Caco-2 (cell line): ENCODE measurements at regions of chr3 and their contacts with region 1.

Region 1: DNA sequence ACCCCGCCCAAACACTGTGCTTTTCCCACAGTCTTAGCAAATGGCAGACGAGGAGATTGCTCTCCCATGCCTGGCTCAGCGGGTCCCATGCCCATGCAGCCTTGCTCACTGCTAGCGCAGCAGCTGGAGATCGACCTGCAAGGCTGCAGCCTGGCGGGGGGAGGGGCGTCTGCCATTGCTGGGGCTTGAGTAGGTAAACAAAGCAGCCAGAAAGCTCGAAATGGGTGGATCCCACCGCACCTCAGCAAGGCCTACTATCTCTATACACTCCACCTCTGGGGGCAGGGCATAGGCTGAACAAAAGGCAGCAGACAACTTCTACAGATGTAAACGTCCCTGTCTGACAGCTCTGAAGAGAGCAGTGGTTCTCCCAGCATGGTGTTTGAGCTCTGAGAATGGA is 27.2 kb upstream of the WDR5B start:
- DNase-seq: peak; percentile 70 to 82
- H3K4me3 ChIP-seq: no peak overlapping the region
- H3K4me3 Mint-ChIP-seq: peak overlapping the region; percentile 56
- H3K27ac Mint-ChIP-seq: peak overlapping the region; percentile 88
- H3K4me1 ChIP-seq: peaks cover 32% of the 10 kb centered on the region
- H3K4me1 Mint-ChIP-seq: peaks cover 36% of the 10 kb centered on the region
- H3K27me3 ChIP-seq: no peaks in the 10 kb centered on the region
- H3K27me3 Mint-ChIP-seq: no peaks in the 10 kb centered on the region
- CTCF ChIP-seq: no peak

Region 2: GRCh38 chr3:122331886-122332285 is 111.2 kb before region 1 on chr3:
- CTCF ChIA-PET with region 1: no interaction called
- POLR2A ChIA-PET with region 1: no interaction called
- intact Hi-C with region 1: no loop called
- DNase-seq: no peak
- H3K4me3 ChIP-seq: no peak overlapping the region
- H3K4me3 Mint-ChIP-seq: no peak overlapping the region
- H3K27ac Mint-ChIP-seq: no peak overlapping the region
- H3K4me1 ChIP-seq: no peaks in the 10 kb centered on the region
- H3K4me1 Mint-ChIP-seq: no peaks in the 10 kb centered on the region
- H3K27me3 ChIP-seq: no peaks in the 10 kb centered on the region
- H3K27me3 Mint-ChIP-seq: peaks cover 6% of the 10 kb centered on the region
- CTCF ChIP-seq: no peak

Region 3: GRCh38 chr3:122392868-122393844 is 49.9 kb before region 1 on chr3:
- CTCF ChIA-PET with region 1: no interaction called
- POLR2A ChIA-PET with region 1: no interaction called
- intact Hi-C with region 1: no loop called
- DNase-seq: peak in 1 of 2 experiments; percentile 39
- H3K4me3 ChIP-seq: no peak overlapping the region
- H3K4me3 Mint-ChIP-seq: no peak overlapping the region
- H3K27ac Mint-ChIP-seq: no peak overlapping the region
- H3K4me1 ChIP-seq: 0 out of 2 replicates have a peak, but pooled peaks cover 4% of the 10 kb centered on the region
- H3K4me1 Mint-ChIP-seq: no peaks in the 10 kb centered on the region
- H3K27me3 ChIP-seq: no peaks in the 10 kb centered on the region
- H3K27me3 Mint-ChIP-seq: no peaks in the 10 kb centered on the region
- CTCF ChIP-seq: peak; percentile 54 to 73

Region 4: GRCh38 chr3:122403489-122403888 is 39.6 kb before region 1 on chr3:
- CTCF ChIA-PET with region 1: no interaction called
- POLR2A ChIA-PET with region 1: no interaction called
- intact Hi-C with region 1: no loop called
- DNase-seq: no peak
- H3K4me3 ChIP-seq: no peak overlapping the region
- H3K4me3 Mint-ChIP-seq: no peak overlapping the region
- H3K27ac Mint-ChIP-seq: no peak overlapping the region
- H3K4me1 ChIP-seq: no peaks in the 10 kb centered on the region
- H3K4me1 Mint-ChIP-seq: no peaks in the 10 kb centered on the region
- H3K27me3 ChIP-seq: no peaks in the 10 kb centered on the region
- H3K27me3 Mint-ChIP-seq: no peaks in the 10 kb centered on the region
- CTCF ChIP-seq: no peak

Region 5: GRCh38 chr3:122415720-122416654 is 27.1 kb before region 1 on chr3 and contains the start of gene WDR5B:
- CTCF ChIA-PET with region 1: no interaction called
- POLR2A ChIA-PET with region 1: interaction called, 3 read pairs
- intact Hi-C with region 1: loop called (anchors 1 kb)
- DNase-seq: peak; percentile 97
- H3K4me3 ChIP-seq: peak within 1 kb of the TSS; percentile 71
- H3K4me3 Mint-ChIP-seq: peak within 1 kb of the TSS; percentile 96
- H3K27ac Mint-ChIP-seq: peak within 1 kb of the TSS; percentile 94
- H3K4me1 ChIP-seq: no peaks in the 10 kb centered on the region; the same call in 1 of the 2 replicates
- H3K4me1 Mint-ChIP-seq: peaks cover 12% of the 10 kb centered on the region
- H3K27me3 ChIP-seq: no peaks in the 10 kb centered on the region
- H3K27me3 Mint-ChIP-seq: no peaks in the 10 kb centered on the region
- CTCF ChIP-seq: no peak
- total RNA-seq, gene WDR5B: 4.4 and 4.7 TPM in 2 replicates

Region 6: GRCh38 chr3:122468896-122469533 is 25.9 kb after region 1 on chr3:
- CTCF ChIA-PET with region 1: no interaction called
- POLR2A ChIA-PET with region 1: no interaction called
- intact Hi-C with region 1: loop called (anchors 1 kb)
- DNase-seq: peak; percentile 53 to 57
- H3K4me3 ChIP-seq: no peak overlapping the region
- H3K4me3 Mint-ChIP-seq: peak overlapping the region; percentile 20
- H3K27ac Mint-ChIP-seq: peak overlapping the region; percentile 1
- H3K4me1 ChIP-seq: peaks cover 34% of the 10 kb centered on the region
- H3K4me1 Mint-ChIP-seq: peaks cover 34% of the 10 kb centered on the region
- H3K27me3 ChIP-seq: no peaks in the 10 kb centered on the region
- H3K27me3 Mint-ChIP-seq: no peaks in the 10 kb centered on the region
- CTCF ChIP-seq: no peak